Calu3 (cell line): ENCODE measurements at regions of chr3 and their contacts with region 1.

Region 1: GRCh38 chr3:50350527-50351322 is at the starts of genes CYB561D2 and NPRL2:
- DNase-seq: peak; percentile 95
- H3K4me3 Mint-ChIP-seq: peak within 1 kb of the TSS; percentile 84
- H3K27ac Mint-ChIP-seq: peak within 1 kb of the TSS; percentile 13
- H3K4me1 Mint-ChIP-seq: peaks cover 16% of the 10 kb centered on the region
- H3K27me3 Mint-ChIP-seq: no peaks in the 10 kb centered on the region
- CTCF ChIP-seq: no peak
- total RNA-seq, gene CYB561D2: 19.4 and 19.7 TPM in 2 replicates
- total RNA-seq, gene NPRL2: 21.0 and 21.8 TPM in 2 replicates

Region 2: GRCh38 chr3:50272911-50273693 is 77.6 kb before region 1 on chr3:
- CTCF ChIA-PET with region 1: no interaction called
- intact Hi-C with region 1: no loop called
- DNase-seq: peak; percentile 94
- H3K4me3 Mint-ChIP-seq: peak overlapping the region; percentile 63
- H3K27ac Mint-ChIP-seq: peak overlapping the region; percentile 32
- H3K4me1 Mint-ChIP-seq: peaks cover 42% of the 10 kb centered on the region
- H3K27me3 Mint-ChIP-seq: no peaks in the 10 kb centered on the region
- CTCF ChIP-seq: peak; percentile 96

Region 3: DNA sequence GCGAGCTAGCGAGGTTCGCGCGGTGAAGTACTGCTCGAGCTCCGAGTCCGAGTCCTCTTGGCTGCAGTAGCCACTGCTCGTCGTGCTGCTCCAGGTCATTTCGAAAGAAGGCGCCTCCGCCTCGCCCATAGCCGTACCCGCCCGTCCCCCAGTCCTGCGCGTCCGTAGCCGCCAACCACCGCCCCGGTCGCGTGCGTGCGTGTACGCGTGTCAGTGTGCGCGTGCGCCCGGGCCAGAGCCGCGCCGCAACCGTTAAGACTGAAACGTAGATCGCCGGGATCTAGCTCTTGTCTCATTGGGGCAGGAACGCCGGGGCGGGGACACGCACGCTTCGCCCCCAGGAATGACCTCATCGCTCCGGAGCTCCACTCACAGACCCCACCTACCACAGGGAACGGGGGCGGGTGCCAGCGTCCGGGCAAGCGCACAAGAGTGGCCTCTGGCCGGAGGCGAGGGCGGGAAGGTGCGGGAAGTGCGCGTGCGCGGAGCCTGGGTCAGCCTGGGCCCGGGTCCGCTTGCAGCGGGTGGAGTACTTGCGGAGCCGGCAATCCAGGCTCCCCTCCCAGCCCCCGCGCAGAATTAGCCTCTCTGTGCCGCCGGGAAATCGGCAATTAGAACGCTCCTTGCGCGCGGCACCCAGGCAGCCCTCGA is 13.4 kb before region 1 on chr3:
- CTCF ChIA-PET with region 1: interaction called, 15 read pairs
- intact Hi-C with region 1: no loop called
- DNase-seq: peak; percentile 98
- H3K4me3 Mint-ChIP-seq: peak overlapping the region; percentile 93
- H3K27ac Mint-ChIP-seq: peak overlapping the region; percentile 82
- H3K4me1 Mint-ChIP-seq: peaks cover 11% of the 10 kb centered on the region
- H3K27me3 Mint-ChIP-seq: peaks cover 18% of the 10 kb centered on the region
- CTCF ChIP-seq: no peak

Region 4: GRCh38 chr3:50427984-50428633 is 77.4 kb after region 1 on chr3:
- CTCF ChIA-PET with region 1: no interaction called
- intact Hi-C with region 1: loop called (anchors 5 kb)
- DNase-seq: peak; percentile 29
- H3K4me3 Mint-ChIP-seq: no peak overlapping the region
- H3K27ac Mint-ChIP-seq: no peak overlapping the region
- H3K4me1 Mint-ChIP-seq: no peaks in the 10 kb centered on the region
- H3K27me3 Mint-ChIP-seq: peaks cover 85% of the 10 kb centered on the region
- CTCF ChIP-seq: no peak

Region 5: GRCh38 chr3:50515565-50516439 is 165.1 kb after region 1 on chr3:
- CTCF ChIA-PET with region 1: no interaction called
- intact Hi-C with region 1: no loop called
- DNase-seq: no peak
- H3K4me3 Mint-ChIP-seq: no peak overlapping the region
- H3K27ac Mint-ChIP-seq: no peak overlapping the region
- H3K4me1 Mint-ChIP-seq: no peaks in the 10 kb centered on the region
- H3K27me3 Mint-ChIP-seq: peaks cover 100% of the 10 kb centered on the region
- CTCF ChIP-seq: no peak